Adrenal gland (tissue), 19 donors: ENCODE measurements at regions of chr6 and their contacts with region 1.

Region 1: DNA sequence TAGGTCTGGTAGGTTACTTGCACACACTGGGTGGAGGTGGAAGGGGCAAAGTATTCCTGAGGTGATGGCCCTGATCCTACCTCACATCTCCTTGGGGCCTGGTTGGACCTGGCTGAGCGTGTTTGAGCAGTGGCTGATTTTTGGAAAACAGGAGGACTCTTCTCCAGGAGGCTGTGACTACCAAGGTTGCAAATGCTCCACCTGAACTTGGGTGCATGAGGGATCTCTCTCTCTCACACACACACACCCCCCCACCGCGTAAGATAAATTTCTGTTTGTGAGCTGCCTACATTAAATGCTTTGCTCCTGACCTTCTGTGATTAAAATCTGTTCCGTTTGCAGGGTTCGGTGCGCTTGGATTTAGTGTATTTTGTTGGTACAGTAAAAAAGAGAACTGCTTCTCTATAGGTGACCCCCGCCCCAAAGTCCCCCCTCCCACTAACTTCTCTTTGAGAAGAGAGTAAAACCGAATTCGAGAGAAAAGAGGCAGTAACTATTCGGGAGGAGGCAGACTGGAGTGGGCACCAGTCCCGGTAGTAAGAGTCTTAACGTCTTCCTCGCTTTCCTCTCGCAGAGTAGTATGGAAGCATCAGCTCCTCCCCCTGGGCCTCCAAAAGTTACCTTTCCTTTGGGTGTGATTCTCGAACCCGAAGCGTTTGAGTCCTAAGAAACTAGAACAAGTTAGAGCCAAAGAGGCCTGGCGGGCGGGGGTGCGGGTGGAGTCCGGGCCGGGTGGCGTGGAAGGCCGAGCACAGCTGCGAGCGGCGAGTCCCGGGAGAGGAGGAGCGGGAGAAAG is 585 bp upstream of the DSE start:
- DNase-seq: peak in 1 of 7 donors; percentile 21
- H3K4me3 ChIP-seq: peak overlapping the region; percentile 55 to 86 (median 68)
- H3K27ac ChIP-seq: peak overlapping the region; percentile 41 to 95 (median 90)
- H3K4me1 ChIP-seq: peaks cover 0 to 8% of the 10 kb centered on the region in 2 donors
- H3K27me3 ChIP-seq: no peaks in the 10 kb centered on the region
- CTCF ChIP-seq: no peak
- POLR2A ChIP-seq: no peak

Region 2: DNA sequence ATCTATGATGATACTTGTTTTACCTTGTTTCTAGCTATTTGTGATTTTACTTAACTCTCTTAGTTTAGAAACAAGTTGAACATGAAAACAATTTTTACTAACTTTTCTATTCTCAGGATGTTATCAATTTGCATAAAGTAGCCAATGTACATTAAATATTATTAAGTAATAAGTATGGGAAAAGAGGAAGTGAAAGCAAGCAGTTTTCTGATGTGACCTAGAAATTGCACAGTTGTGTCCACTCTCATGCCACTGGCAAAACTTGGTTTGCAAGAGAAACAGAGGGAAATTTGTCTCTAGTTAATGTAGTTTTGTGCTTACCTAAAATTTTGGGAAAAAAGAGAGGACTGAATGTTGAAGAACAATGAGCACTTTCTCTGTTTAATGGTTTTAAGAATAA is 71.2 kb before region 1 on chr6:
- intact Hi-C with region 1: loop called in 1 of 2 experiments (anchors 10 kb)
- DNase-seq: no peak
- H3K4me3 ChIP-seq: no peak overlapping the region
- H3K27ac ChIP-seq: no peak overlapping the region
- H3K4me1 ChIP-seq: peaks cover 0 to 10% of the 10 kb centered on the region in 2 donors
- H3K27me3 ChIP-seq: no peaks in the 10 kb centered on the region
- CTCF ChIP-seq: no peak
- POLR2A ChIP-seq: no peak